ENCODE measurements at regions of chr7 and their contacts with region 1.

Region 1: GRCh38 chr7:22559829-22560489 is 60.0 kb upstream of the STEAP1B start:
- DNase-seq: peak; percentile 88
- ATAC-seq: peak; percentile 90
- H3K4me3 ChIP-seq: no peak overlapping the region
- H3K4me3 Mint-ChIP-seq: peak overlapping the region; percentile 51
- H3K27ac ChIP-seq: no peak overlapping the region
- H3K27ac Mint-ChIP-seq: peak overlapping the region; percentile 26
- H3K4me1 ChIP-seq: peaks cover 39 to 47% of the 10 kb centered on the region in 2 donors
- H3K4me1 Mint-ChIP-seq: peaks cover 41% of the 10 kb centered on the region
- H3K27me3 ChIP-seq: no peaks in the 10 kb centered on the region
- H3K27me3 Mint-ChIP-seq: no peaks in the 10 kb centered on the region
- CTCF ChIP-seq: peak; percentile 95

Region 2: GRCh38 chr7:21886396-21886795 is 673.6 kb before region 1 on chr7:
- CTCF ChIA-PET with region 1: no interaction called
- POLR2A ChIA-PET with region 1: no interaction called
- intact Hi-C with region 1: no loop called
- DNase-seq: no peak
- ATAC-seq: no peak
- H3K4me3 ChIP-seq: no peak overlapping the region
- H3K4me3 Mint-ChIP-seq: no peak overlapping the region
- H3K27ac ChIP-seq: no peak overlapping the region
- H3K27ac Mint-ChIP-seq: no peak overlapping the region
- H3K4me1 ChIP-seq: no peaks in the 10 kb centered on the region
- H3K4me1 Mint-ChIP-seq: no peaks in the 10 kb centered on the region
- H3K27me3 ChIP-seq: no peaks in the 10 kb centered on the region
- H3K27me3 Mint-ChIP-seq: no peaks in the 10 kb centered on the region
- CTCF ChIP-seq: no peak

Region 3: GRCh38 chr7:22433710-22434460 is 126.1 kb before region 1 on chr7:
- CTCF ChIA-PET with region 1: no interaction called
- POLR2A ChIA-PET with region 1: no interaction called
- intact Hi-C with region 1: no loop called
- DNase-seq: no peak
- ATAC-seq: no peak
- H3K4me3 ChIP-seq: no peak overlapping the region
- H3K4me3 Mint-ChIP-seq: no peak overlapping the region
- H3K27ac ChIP-seq: no peak overlapping the region
- H3K27ac Mint-ChIP-seq: peak overlapping the region; percentile 7
- H3K4me1 ChIP-seq: peaks cover 18% of the 10 kb centered on the region in 2 donors
- H3K4me1 Mint-ChIP-seq: peaks cover 27% of the 10 kb centered on the region
- H3K27me3 ChIP-seq: no peaks in the 10 kb centered on the region
- H3K27me3 Mint-ChIP-seq: no peaks in the 10 kb centered on the region
- CTCF ChIP-seq: no peak

Region 4: GRCh38 chr7:22577396-22578001 is 17.5 kb after region 1 on chr7:
- CTCF ChIA-PET with region 1: interaction called, 48 read pairs
- POLR2A ChIA-PET with region 1: no interaction called
- intact Hi-C with region 1: loop called (anchors 2 kb)
- DNase-seq: no peak
- ATAC-seq: peak; percentile 33
- H3K4me3 ChIP-seq: no peak overlapping the region
- H3K4me3 Mint-ChIP-seq: peak overlapping the region; percentile 66
- H3K27ac ChIP-seq: no peak overlapping the region
- H3K27ac Mint-ChIP-seq: peak overlapping the region; percentile 51
- H3K4me1 ChIP-seq: peaks cover 16% of the 10 kb centered on the region in 2 donors
- H3K4me1 Mint-ChIP-seq: peaks cover 29% of the 10 kb centered on the region
- H3K27me3 ChIP-seq: no peaks in the 10 kb centered on the region
- H3K27me3 Mint-ChIP-seq: no peaks in the 10 kb centered on the region
- CTCF ChIP-seq: no peak

Region 5: GRCh38 chr7:22660732-22661131 is 100.8 kb after region 1 on chr7:
- CTCF ChIA-PET with region 1: interaction called, 49 read pairs
- POLR2A ChIA-PET with region 1: interaction called, 4 read pairs
- intact Hi-C with region 1: loop called (anchors 2 kb)
- DNase-seq: peak; percentile 56
- ATAC-seq: no peak
- H3K4me3 ChIP-seq: peak overlapping the region; percentile 38 to 56 (median 44)
- H3K4me3 Mint-ChIP-seq: peak overlapping the region; percentile 71
- H3K27ac ChIP-seq: peak overlapping the region; percentile 99 to 100
- H3K27ac Mint-ChIP-seq: peak overlapping the region; percentile 92
- H3K4me1 ChIP-seq: peaks cover 79 to 84% of the 10 kb centered on the region in 2 donors
- H3K4me1 Mint-ChIP-seq: peaks cover 78% of the 10 kb centered on the region
- H3K27me3 ChIP-seq: no peaks in the 10 kb centered on the region
- H3K27me3 Mint-ChIP-seq: no peaks in the 10 kb centered on the region
- CTCF ChIP-seq: peak; percentile 51

Region 6: GRCh38 chr7:22776964-22777363 is 217.0 kb after region 1 on chr7:
- CTCF ChIA-PET with region 1: interaction called, 268 read pairs
- POLR2A ChIA-PET with region 1: no interaction called
- intact Hi-C with region 1: loop called (anchors 1 kb)
- DNase-seq: no peak
- ATAC-seq: no peak
- H3K4me3 ChIP-seq: no peak overlapping the region
- H3K4me3 Mint-ChIP-seq: no peak overlapping the region
- H3K27ac ChIP-seq: no peak overlapping the region
- H3K27ac Mint-ChIP-seq: no peak overlapping the region
- H3K4me1 ChIP-seq: no peaks in the 10 kb centered on the region
- H3K4me1 Mint-ChIP-seq: no peaks in the 10 kb centered on the region
- H3K27me3 ChIP-seq: peaks cover 0 to 4% (median 0%) of the 10 kb centered on the region in 4 experiments
- H3K27me3 Mint-ChIP-seq: peaks cover 7% of the 10 kb centered on the region
- CTCF ChIP-seq: no peak

Region 7: GRCh38 chr7:22860784-22861482 is 301.0 kb after region 1 on chr7:
- CTCF ChIA-PET with region 1: interaction called, 13 read pairs
- POLR2A ChIA-PET with region 1: no interaction called
- intact Hi-C with region 1: no loop called
- DNase-seq: peak; percentile 39
- ATAC-seq: peak; percentile 66
- H3K4me3 ChIP-seq: no peak overlapping the region
- H3K4me3 Mint-ChIP-seq: no peak overlapping the region
- H3K27ac ChIP-seq: no peak overlapping the region
- H3K27ac Mint-ChIP-seq: peak overlapping the region; percentile 11
- H3K4me1 ChIP-seq: peaks cover 0 to 3% of the 10 kb centered on the region in 2 donors
- H3K4me1 Mint-ChIP-seq: peaks cover 39% of the 10 kb centered on the region
- H3K27me3 ChIP-seq: no peaks in the 10 kb centered on the region
- H3K27me3 Mint-ChIP-seq: no peaks in the 10 kb centered on the region
- CTCF ChIP-seq: peak; percentile 82